Psoas muscle (tissue), 8 donors: ENCODE measurements at regions of chr14 and their contacts with region 1.

Region 1: GRCh38 chr14:35229495-35230089 is 62.6 kb upstream of the PSMA6 start:
- DNase-seq: no peak
- ATAC-seq: peak in 2 of 4 donors; percentile 37 to 58
- H3K4me3 ChIP-seq: no peak overlapping the region
- H3K27ac ChIP-seq: no peak overlapping the region
- H3K4me1 ChIP-seq: no peaks in the 10 kb centered on the region
- H3K27me3 ChIP-seq: no peaks in the 10 kb centered on the region
- CTCF ChIP-seq: peak; percentile 26

Region 2: GRCh38 chr14:35404449-35405303 is 175.1 kb after region 1 on chr14 and contains the start of gene NFKBIA:
- intact Hi-C with region 1: loop called in 1 of 2 experiments (anchors 5 kb)
- DNase-seq: peak; percentile 92 to 97
- ATAC-seq: peak; percentile 61 to 76 (median 62)
- H3K4me3 ChIP-seq: peak within 1 kb of the TSS; percentile 98
- H3K27ac ChIP-seq: peak within 1 kb of the TSS; percentile 100
- H3K4me1 ChIP-seq: peaks cover 36% of the 10 kb centered on the region
- H3K27me3 ChIP-seq: no peaks in the 10 kb centered on the region
- CTCF ChIP-seq: peak; percentile 26
- total RNA-seq, gene NFKBIA: 48.7 to 144 (median 96.4) TPM